Panc1 (cell line): ENCODE measurements at regions of chrX and their contacts with region 1.

Region 1: GRCh38 chrX:102727761-102728160 is 7.2 kb downstream of the GPRASP3 start:
- DNase-seq: no peak
- ATAC-seq: no peak
- H3K4me3 ChIP-seq: no peak overlapping the region
- H3K27ac ChIP-seq: no peak overlapping the region
- H3K4me1 ChIP-seq: no peaks in the 10 kb centered on the region
- H3K27me3 ChIP-seq: no peaks in the 10 kb centered on the region
- CTCF ChIP-seq: no peak

Region 2: GRCh38 chrX:102672856-102673255 is 54.9 kb before region 1 on chrX:
- CTCF ChIA-PET with region 1: no interaction called
- POLR2A ChIA-PET with region 1: no interaction called
- in situ Hi-C with region 1: no loop called
- intact Hi-C with region 1: no loop called
- DNase-seq: no peak
- ATAC-seq: peak; percentile 53; the same call in 1 of the 2 replicates
- H3K4me3 ChIP-seq: no peak overlapping the region
- H3K27ac ChIP-seq: no peak overlapping the region
- H3K4me1 ChIP-seq: 0 out of 2 replicates have a peak, but pooled peaks cover 5% of the 10 kb centered on the region
- H3K27me3 ChIP-seq: no peaks in the 10 kb centered on the region
- CTCF ChIP-seq: no peak

Region 3: DNA sequence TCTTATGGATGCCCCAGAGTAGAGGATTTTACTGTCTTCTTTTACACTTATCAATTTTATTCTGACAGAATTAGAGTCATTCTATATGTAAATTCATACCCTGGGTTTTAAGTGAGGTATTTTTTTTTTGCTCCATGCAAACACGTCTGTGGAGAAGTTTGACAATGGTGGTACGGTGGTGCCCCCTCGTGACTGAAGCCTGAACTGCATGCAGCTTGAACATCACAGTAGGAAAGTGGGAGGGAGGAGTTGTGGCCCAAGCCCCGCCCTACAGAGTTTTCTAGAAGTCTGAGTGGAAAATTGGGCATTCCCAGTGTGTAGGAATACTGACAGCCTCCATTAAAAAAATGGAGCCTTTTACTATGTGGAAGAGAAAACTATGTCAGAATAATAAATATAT is 136.0 kb after region 1 on chrX:
- CTCF ChIA-PET with region 1: no interaction called
- POLR2A ChIA-PET with region 1: no interaction called
- in situ Hi-C with region 1: no loop called
- intact Hi-C with region 1: no loop called
- DNase-seq: peak; percentile 72
- ATAC-seq: peak; percentile 86
- H3K4me3 ChIP-seq: no peak overlapping the region
- H3K27ac ChIP-seq: no peak overlapping the region
- H3K4me1 ChIP-seq: no peaks in the 10 kb centered on the region
- H3K27me3 ChIP-seq: no peaks in the 10 kb centered on the region
- CTCF ChIP-seq: peak; percentile 90

Region 4: DNA sequence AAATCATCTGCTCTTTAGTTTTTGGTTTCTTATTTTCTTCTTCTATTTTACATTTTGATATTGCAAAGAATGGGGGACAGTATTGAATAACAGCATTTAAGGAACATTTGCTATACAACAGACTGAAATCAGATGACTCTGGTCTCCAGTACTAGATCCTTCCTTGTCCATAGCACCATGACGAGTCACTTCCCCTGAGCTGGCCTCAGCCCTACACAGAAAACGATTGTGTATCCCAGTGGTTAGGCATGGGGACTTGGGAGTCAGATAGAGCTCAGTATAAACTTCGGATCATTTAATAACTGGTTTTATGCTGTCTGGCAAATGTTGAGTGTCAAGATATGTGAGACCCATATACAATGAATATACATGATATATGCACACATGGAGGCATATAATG is 442.5 kb after region 1 on chrX:
- CTCF ChIA-PET with region 1: interaction called, 14 read pairs
- POLR2A ChIA-PET with region 1: no interaction called
- in situ Hi-C with region 1: no loop called
- intact Hi-C with region 1: no loop called
- DNase-seq: no peak
- ATAC-seq: 0 out of 2 replicates have a peak, but pooled peaks have one; percentile 62
- H3K4me3 ChIP-seq: no peak overlapping the region
- H3K27ac ChIP-seq: no peak overlapping the region
- H3K4me1 ChIP-seq: no peaks in the 10 kb centered on the region
- H3K27me3 ChIP-seq: no peaks in the 10 kb centered on the region
- CTCF ChIP-seq: no peak